ENCODE measurements at regions of chr12 and their contacts with region 1.

Region 1: GRCh38 chr12:104286538-104287482 is 16.7 kb upstream of the EID3 start:
- DNase-seq: peak; percentile 97
- H3K4me3 Mint-ChIP-seq: peak overlapping the region; percentile 96
- H3K27ac Mint-ChIP-seq: peak overlapping the region; percentile 98
- H3K4me1 Mint-ChIP-seq: peaks cover 25% of the 10 kb centered on the region
- H3K27me3 Mint-ChIP-seq: no peaks in the 10 kb centered on the region

Region 2: DNA sequence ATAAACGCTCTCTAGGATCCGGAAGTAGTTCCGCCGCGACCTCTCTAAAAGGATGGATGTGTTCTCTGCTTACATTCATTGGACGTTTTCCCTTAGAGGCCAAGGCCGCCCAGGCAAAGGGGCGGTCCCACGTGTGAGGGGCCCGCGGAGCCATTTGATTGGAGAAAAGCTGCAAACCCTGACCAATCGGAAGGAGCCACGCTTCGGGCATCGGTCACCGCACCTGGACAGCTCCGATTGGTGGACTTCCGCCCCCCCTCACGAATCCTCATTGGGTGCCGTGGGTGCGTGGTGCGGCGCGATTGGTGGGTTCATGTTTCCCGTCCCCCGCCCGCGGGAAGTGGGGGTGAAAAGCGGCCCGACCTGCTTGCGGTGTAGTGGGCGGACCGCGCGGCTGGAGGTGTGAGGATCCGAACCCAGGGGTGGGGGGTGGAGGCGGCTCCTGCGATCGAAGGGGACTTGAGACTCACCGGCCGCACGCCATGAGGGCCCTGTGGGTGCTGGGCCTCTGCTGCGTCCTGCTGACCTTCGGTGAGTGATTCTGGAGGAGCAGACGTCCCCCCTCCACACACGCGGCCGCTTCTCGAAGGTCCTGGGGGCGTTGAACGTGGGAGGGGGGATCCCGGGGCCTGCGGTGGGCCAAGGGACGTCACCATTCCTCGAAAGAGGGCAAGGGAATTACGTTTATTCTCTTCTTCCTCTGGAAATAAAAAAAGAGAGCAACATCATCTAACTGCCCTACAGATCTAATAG is 356.6 kb before region 1 on chr12 and contains the start of gene HSP90B1:
- intact Hi-C with region 1: loop called (anchors 1 kb)
- DNase-seq: peak; percentile 100
- H3K4me3 Mint-ChIP-seq: peak within 1 kb of the TSS; percentile 90
- H3K27ac Mint-ChIP-seq: peak within 1 kb of the TSS; percentile 99
- H3K4me1 Mint-ChIP-seq: peaks cover 63% of the 10 kb centered on the region
- H3K27me3 Mint-ChIP-seq: peaks cover 3% of the 10 kb centered on the region
- total RNA-seq, gene HSP90B1: 449 and 457 TPM in 2 replicates

Region 3: DNA sequence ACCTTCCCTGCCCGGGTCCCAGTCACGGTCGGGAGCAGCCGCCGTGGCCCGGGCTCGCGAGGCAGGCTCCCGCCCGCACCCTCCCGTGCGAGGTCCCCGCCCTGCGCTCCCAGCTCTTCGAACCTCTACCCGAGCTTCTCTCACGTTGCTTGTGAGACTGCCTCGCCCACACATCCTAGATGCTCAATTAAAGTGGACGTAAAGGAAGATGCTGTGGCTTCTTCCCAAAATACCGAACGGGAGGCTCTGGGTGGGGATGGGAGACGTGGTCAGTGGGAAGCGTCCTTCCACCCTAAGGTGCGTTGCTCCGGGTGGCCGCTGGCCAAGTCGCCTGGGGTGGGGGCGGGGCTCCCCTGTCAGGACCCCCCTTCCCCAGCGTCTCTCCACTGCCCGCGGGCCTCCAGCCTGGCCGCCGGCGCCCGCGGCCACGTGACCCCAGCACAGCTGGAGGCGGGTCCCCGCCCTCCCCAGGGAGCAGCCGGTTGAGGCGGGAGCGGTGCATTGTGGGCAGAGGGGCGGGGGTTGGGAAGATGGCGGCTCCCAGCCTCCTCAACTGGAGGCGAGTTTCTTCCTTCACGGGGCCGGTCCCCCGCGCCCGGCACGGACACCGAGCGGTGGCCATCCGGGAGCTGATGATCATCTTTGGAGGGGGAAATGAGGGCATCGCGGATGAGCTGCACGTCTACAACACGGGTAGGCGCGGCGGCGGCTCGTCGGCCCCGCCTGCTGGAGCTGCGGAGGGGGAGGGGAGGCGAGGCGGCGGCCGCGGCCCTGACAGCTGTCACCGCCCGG is 222.6 kb before region 1 on chr12 and contains the start of gene HCFC2:
- intact Hi-C with region 1: loop called (anchors 5 kb)
- DNase-seq: peak; percentile 97
- H3K4me3 Mint-ChIP-seq: peak within 1 kb of the TSS; percentile 98
- H3K27ac Mint-ChIP-seq: peak within 1 kb of the TSS; percentile 91
- H3K4me1 Mint-ChIP-seq: peaks cover 20% of the 10 kb centered on the region
- H3K27me3 Mint-ChIP-seq: peaks cover 30% of the 10 kb centered on the region
- total RNA-seq, gene HCFC2: 8.2 and 8.6 TPM in 2 replicates

Region 4: GRCh38 chr12:104201238-104202001 is 85.4 kb before region 1 on chr12:
- intact Hi-C with region 1: loop called (anchors 5 kb)
- DNase-seq: peak; percentile 85
- H3K4me3 Mint-ChIP-seq: no peak overlapping the region
- H3K27ac Mint-ChIP-seq: no peak overlapping the region
- H3K4me1 Mint-ChIP-seq: peaks cover 2% of the 10 kb centered on the region
- H3K27me3 Mint-ChIP-seq: peaks cover 18% of the 10 kb centered on the region

Region 5: GRCh38 chr12:104303538-104304151 is 16.8 kb after region 1 on chr12 and contains the start of gene EID3:
- intact Hi-C with region 1: loop called (anchors 1 kb)
- DNase-seq: peak; percentile 98
- H3K4me3 Mint-ChIP-seq: peak within 1 kb of the TSS; percentile 94
- H3K27ac Mint-ChIP-seq: peak within 1 kb of the TSS; percentile 98
- H3K4me1 Mint-ChIP-seq: peaks cover 57% of the 10 kb centered on the region
- H3K27me3 Mint-ChIP-seq: no peaks in the 10 kb centered on the region
- total RNA-seq, gene EID3: 9.0 and 9.7 TPM in 2 replicates

Region 6: GRCh38 chr12:105107494-105108371 is 820.9 kb after region 1 on chr12 and contains the start of gene WASHC4:
- intact Hi-C with region 1: loop called (anchors 1 kb)
- DNase-seq: peak; percentile 99
- H3K4me3 Mint-ChIP-seq: peak within 1 kb of the TSS; percentile 96
- H3K27ac Mint-ChIP-seq: peak within 1 kb of the TSS; percentile 96
- H3K4me1 Mint-ChIP-seq: peaks cover 33% of the 10 kb centered on the region
- H3K27me3 Mint-ChIP-seq: peaks cover 25% of the 10 kb centered on the region
- total RNA-seq, gene WASHC4: 31.5 and 36.5 TPM in 2 replicates

Region 7: DNA sequence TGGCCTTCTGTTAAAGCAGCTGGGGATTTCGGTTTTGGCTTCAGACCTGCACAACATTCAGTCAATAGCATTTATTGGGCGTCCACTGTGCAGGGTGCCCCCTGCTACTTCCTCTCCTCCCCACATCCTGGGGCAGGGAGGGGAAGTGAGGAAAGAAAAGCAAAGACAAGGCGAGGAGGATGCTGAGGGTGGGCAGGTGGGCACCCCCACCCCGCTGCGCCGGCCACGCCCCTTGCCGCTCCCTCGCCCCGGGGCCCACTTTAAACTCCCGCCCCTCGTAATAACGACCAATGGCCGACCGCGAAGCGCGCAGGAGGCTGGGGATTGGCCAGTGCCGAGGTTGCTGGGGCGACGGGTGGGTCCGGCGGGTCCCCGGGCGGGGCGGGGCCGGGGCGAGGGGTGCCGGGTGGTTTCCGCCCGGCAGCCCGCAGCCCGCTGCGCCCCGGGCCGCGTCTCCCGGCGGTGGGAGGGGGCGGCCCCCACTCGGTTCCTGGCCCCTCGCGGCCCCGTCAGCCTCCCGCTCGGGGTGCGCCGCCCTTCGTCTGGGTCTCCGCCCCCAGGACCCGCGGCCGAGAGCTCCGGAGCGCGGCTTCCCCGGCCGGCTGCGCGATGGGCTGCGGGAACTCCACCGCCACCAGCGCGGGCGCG is 1043.6 kb after region 1 on chr12 and contains the start of gene C12orf75:
- intact Hi-C with region 1: loop called (anchors 2 kb)
- DNase-seq: peak; percentile 98
- H3K4me3 Mint-ChIP-seq: peak within 1 kb of the TSS; percentile 82
- H3K27ac Mint-ChIP-seq: peak within 1 kb of the TSS; percentile 91
- H3K4me1 Mint-ChIP-seq: peaks cover 72% of the 10 kb centered on the region
- H3K27me3 Mint-ChIP-seq: no peaks in the 10 kb centered on the region
- total RNA-seq, gene C12orf75: 91.4 and 96.1 TPM in 2 replicates